Psoas muscle (tissue), 8 donors: ENCODE measurements at regions of chrX and their contacts with region 1.

Region 1: GRCh38 chrX:27918799-27919198 is 62.5 kb downstream of the DCAF8L1 start:
- DNase-seq: no peak
- ATAC-seq: no peak
- H3K4me3 ChIP-seq: no peak overlapping the region
- H3K27ac ChIP-seq: no peak overlapping the region
- H3K4me1 ChIP-seq: no peaks in the 10 kb centered on the region
- H3K27me3 ChIP-seq: no peaks in the 10 kb centered on the region
- CTCF ChIP-seq: no peak

Region 2: DNA sequence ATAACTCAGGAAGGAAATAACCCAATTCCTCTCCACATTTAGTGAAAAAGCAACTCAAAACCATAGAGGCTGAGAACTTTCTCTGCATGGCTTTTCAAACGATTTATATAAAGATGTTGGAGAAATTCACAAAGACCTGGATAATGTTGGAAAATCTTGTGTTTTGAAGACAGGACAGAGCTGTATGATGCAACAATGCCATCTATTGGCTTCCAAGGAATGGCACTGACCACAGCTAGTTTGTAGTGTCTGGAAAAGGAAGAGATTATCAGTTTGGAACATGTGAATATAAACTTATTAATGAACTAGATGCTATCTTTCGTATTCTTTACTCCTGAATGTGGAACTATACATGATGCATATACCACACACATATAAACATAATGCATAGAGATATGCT is 1172.0 kb after region 1 on chrX:
- intact Hi-C with region 1: loop called in 1 of 2 experiments (anchors 5 kb)
- DNase-seq: no peak
- ATAC-seq: no peak
- H3K4me3 ChIP-seq: no peak overlapping the region
- H3K27ac ChIP-seq: no peak overlapping the region
- H3K4me1 ChIP-seq: no peaks in the 10 kb centered on the region
- H3K27me3 ChIP-seq: no peaks in the 10 kb centered on the region
- CTCF ChIP-seq: peak; percentile 24